ENCODE measurements at regions of chr4 and their contacts with region 1.

Region 1: DNA sequence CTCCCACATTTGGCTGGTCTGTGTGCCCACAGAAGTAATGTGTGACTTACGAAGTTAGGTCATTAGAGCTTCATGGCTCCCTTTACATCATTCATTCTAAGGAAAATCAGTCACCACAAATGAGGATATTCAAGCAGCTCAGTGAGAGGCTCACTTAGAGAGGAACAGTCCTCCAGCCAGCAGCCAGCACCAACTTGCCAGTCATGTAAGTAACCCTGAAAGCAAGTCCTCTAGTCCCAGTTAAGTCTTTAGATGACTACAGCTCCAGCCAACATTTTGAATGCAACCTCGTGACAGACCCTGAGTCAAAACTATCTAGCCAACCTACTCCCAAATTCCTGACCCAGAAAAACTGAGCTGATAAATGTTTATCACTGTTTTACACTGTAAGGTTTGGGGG is 71.3 kb downstream of the LRBA start:
- DNase-seq: no peak
- H3K4me3 Mint-ChIP-seq: no peak overlapping the region
- H3K27ac Mint-ChIP-seq: no peak overlapping the region
- H3K4me1 Mint-ChIP-seq: peaks cover 13% of the 10 kb centered on the region
- H3K27me3 Mint-ChIP-seq: no peaks in the 10 kb centered on the region
- CTCF ChIP-seq: no peak

Region 2: GRCh38 chr4:150909116-150909515 is 34.7 kb before region 1 on chr4:
- CTCF ChIA-PET with region 1: no interaction called
- POLR2A ChIA-PET with region 1: no interaction called
- intact Hi-C with region 1: no loop called
- DNase-seq: no peak
- H3K4me3 Mint-ChIP-seq: no peak overlapping the region
- H3K27ac Mint-ChIP-seq: no peak overlapping the region
- H3K4me1 Mint-ChIP-seq: no peaks in the 10 kb centered on the region
- H3K27me3 Mint-ChIP-seq: no peaks in the 10 kb centered on the region
- CTCF ChIP-seq: no peak

Region 3: GRCh38 chr4:150960818-150961217 is 17.0 kb after region 1 on chr4:
- CTCF ChIA-PET with region 1: interaction called, 11 read pairs
- POLR2A ChIA-PET with region 1: interaction called, 4 read pairs
- intact Hi-C with region 1: no loop called
- DNase-seq: peak; percentile 62
- H3K4me3 Mint-ChIP-seq: no peak overlapping the region
- H3K27ac Mint-ChIP-seq: no peak overlapping the region
- H3K4me1 Mint-ChIP-seq: peaks cover 14% of the 10 kb centered on the region
- H3K27me3 Mint-ChIP-seq: no peaks in the 10 kb centered on the region
- CTCF ChIP-seq: peak; percentile 28

Region 4: GRCh38 chr4:150999086-150999485 is 55.3 kb after region 1 on chr4:
- CTCF ChIA-PET with region 1: no interaction called
- POLR2A ChIA-PET with region 1: no interaction called
- intact Hi-C with region 1: no loop called
- DNase-seq: no peak
- H3K4me3 Mint-ChIP-seq: no peak overlapping the region
- H3K27ac Mint-ChIP-seq: no peak overlapping the region
- H3K4me1 Mint-ChIP-seq: peaks cover 18% of the 10 kb centered on the region
- H3K27me3 Mint-ChIP-seq: no peaks in the 10 kb centered on the region
- CTCF ChIP-seq: no peak

Region 5: GRCh38 chr4:151015459-151016347 is 71.9 kb after region 1 on chr4:
- CTCF ChIA-PET with region 1: no interaction called
- POLR2A ChIA-PET with region 1: no interaction called
- intact Hi-C with region 1: no loop called
- DNase-seq: peak; percentile 81
- H3K4me3 Mint-ChIP-seq: peak overlapping the region; percentile 99
- H3K27ac Mint-ChIP-seq: peak overlapping the region; percentile 83
- H3K4me1 Mint-ChIP-seq: peaks cover 13% of the 10 kb centered on the region
- H3K27me3 Mint-ChIP-seq: no peaks in the 10 kb centered on the region
- CTCF ChIP-seq: no peak

Measured in MCF 10A (cell line).